ENCODE measurements at regions of chr7 and their contacts with region 1.

Region 1: GRCh38 chr7:17009007-17009719 is 127.4 kb upstream of the AGR3 start:
- DNase-seq: no peak
- CTCF ChIP-seq: peak; percentile 30

Region 2: DNA sequence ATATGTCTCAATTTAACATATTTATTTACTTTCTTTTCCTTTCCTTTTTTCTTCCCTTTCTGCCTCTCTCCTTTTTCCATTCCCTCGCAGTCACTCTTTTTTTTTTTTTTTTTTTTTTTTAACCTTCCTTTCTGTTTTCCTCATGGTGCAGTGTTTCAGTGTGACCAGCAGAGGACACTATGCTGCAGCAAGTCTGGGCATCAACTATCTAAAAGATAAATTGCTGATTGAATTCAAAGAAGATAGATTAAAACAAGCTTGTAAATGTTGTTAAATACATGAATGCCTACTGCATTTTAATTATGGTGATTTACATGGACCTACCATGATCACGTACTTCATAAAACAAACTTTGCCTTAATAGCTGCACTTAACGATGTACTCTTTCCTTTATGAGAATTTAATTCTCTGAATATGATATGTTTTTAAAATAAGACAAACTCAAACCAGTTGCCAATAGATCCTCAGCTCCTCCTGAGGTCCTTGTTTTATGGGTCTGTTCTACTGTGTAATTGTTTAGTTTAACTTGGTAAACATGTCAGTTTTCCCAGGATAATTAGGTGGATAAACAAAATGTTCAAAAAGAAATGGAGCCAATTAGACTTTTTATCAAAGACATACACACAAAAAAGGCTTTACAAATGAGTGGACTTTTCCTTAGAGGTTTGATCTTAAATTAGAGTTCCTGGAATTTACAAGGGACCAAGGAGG is 26.4 kb before region 1 on chr7:
- CTCF ChIA-PET with region 1: interaction called, 22 read pairs
- POLR2A ChIA-PET with region 1: no interaction called
- DNase-seq: no peak
- CTCF ChIP-seq: peak; percentile 88

Region 3: GRCh38 chr7:17021180-17021579 is 12.0 kb after region 1 on chr7:
- CTCF ChIA-PET with region 1: interaction called, 11 read pairs
- POLR2A ChIA-PET with region 1: no interaction called
- DNase-seq: no peak
- CTCF ChIP-seq: no peak

Region 4: DNA sequence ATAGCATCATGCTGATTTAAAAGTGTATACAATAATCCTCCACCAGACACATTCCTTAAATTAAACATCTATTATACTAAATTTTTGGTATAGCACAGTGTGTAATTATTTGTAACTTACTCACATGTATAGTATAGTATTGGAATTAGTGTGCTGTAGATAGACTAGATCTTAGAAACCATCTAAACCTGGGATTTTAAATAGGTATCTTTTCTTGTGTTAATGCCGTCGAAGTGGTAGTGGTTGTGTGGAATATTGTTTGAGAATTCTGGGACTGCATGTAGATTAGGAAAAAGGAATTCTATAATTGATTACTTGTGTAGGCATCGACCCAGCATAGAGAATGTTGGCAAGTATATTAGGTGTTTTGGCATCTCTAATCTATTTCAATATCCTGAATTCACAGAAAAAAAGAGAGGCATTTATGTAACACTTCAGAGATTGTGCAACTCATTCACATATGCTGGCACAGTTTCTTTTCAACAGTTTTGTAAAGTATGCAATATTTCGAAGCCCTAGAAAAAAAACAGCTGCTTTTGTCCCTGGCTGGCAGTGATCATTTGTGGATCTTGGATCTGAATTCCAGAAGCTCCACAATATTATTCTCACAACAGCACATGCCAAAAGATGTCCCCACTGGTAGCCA is 18.1 kb after region 1 on chr7:
- CTCF ChIA-PET with region 1: interaction called, 11 read pairs
- POLR2A ChIA-PET with region 1: no interaction called
- DNase-seq: no peak
- CTCF ChIP-seq: no peak

Measured in GM10248 (cell line).